ENCODE measurements at regions of chr17 and their contacts with region 1.

Region 1: DNA sequence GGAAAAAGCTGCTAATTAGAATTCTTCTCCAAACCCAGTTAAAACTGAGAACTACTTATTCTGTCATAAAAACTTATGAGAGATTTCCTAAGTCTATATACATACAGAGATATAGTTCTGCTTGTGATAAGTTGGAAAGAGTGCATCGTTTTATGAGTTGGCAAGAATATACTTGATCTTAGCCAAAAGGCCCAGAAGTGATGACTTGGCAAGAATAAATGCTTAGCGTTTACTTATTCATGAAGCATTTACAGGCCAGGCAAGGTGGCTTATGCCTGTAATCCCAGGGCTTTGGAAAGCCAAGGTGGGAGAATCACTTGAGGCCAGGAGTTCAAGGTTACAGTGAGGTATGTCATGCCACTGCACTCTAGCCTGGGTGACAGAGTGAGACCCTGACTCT is 81.7 kb downstream of the CYB561 start:
- DNase-seq: no peak
- ATAC-seq: no peak
- H3K4me3 ChIP-seq: no peak overlapping the region
- H3K27ac ChIP-seq: no peak overlapping the region
- H3K4me1 ChIP-seq: no peaks in the 10 kb centered on the region
- CTCF ChIP-seq: no peak
- EP300 ChIP-seq: no peak
- POLR2A ChIP-seq: no peak
- RAD21 ChIP-seq: no peak

Region 2: DNA sequence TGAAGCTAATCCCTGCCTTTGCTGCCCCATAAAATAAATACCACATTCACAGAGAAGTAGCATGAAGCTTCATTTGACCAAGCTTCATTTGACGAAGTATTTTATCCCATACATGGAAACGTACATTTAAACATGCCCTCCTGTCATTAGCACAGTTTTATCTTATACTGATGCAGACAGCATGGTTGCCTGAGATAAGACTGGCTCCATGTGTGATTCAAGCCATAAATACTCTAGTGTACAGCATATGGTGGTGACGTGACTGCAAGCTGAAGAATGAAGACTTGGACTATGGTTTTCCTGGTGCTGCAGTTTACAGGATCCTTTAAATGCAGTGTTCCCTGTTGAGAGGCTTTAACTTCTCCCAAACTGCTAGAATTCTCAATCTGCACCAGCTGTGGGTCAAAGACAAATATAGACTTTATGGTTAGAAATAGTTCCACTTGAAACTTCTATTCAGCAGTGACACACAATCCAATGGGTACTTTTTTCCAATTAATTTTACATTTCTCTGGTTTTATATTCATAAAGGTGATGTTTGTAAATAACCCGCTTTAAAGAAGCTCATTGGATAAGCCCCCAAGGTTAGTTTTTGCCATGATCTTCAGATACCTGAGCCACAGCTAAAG is 16.8 kb after region 1 on chr17:
- CTCF ChIA-PET with region 1: interaction called, 12 read pairs
- POLR2A ChIA-PET with region 1: no interaction called
- DNase-seq: no peak
- ATAC-seq: no peak
- H3K4me3 ChIP-seq: no peak overlapping the region
- H3K27ac ChIP-seq: no peak overlapping the region
- H3K4me1 ChIP-seq: no peaks in the 10 kb centered on the region; the same call in 2 of the 3 replicates
- CTCF ChIP-seq: no peak
- EP300 ChIP-seq: no peak
- POLR2A ChIP-seq: no peak
- RAD21 ChIP-seq: no peak